Adrenal gland (tissue), 19 donors: ENCODE measurements at regions of chr2 and their contacts with region 1.

Region 1: GRCh38 chr2:55150834-55151233 is 81.3 kb downstream of the CLHC1 start:
- DNase-seq: no peak
- H3K4me3 ChIP-seq: no peak overlapping the region
- H3K27ac ChIP-seq: no peak overlapping the region
- H3K4me1 ChIP-seq: no peaks in the 10 kb centered on the region
- H3K27me3 ChIP-seq: no peaks in the 10 kb centered on the region
- CTCF ChIP-seq: no peak
- POLR2A ChIP-seq: no peak

Region 2: DNA sequence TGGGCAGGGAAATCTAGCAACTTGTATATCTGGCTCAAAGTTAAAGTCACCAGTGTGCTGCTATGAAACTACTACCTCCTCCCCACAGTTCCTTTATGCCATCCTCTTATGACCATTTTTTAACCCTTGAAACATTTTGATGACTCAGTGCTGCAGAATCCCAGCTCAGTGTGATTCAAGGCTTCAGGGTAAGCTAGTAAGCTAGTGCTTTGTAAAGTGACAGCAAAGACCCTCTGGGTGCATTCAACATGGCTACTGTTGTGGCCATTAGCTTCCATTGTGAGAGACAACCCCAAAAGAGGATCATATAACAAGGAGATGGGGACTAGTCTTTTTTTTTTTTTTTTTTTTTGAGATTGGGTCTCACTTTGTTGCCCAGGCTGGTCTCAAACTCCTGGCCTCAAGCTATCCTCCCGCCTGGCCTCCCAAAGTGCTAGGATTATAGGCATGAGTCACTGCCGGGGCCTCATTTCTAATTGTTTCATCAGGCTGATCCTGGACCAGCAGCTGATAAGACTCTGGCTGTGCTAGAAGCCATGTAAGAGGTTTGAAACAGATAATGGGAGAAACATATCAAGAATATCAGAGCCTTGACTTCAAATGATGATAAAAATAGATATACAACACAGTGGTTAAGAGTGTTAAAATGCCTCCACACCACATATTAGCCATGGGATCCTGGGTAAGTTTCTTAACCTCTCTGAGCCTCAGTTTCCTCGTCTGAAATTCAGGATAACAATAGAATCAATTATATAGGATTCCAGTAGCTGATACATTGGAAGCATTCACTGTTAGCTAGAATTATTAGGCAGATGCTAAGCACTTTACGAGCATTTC is 34.9 kb before region 1 on chr2:
- intact Hi-C with region 1: loop called in 1 of 2 experiments (anchors 5 kb)
- DNase-seq: peak in 5 of 7 donors; percentile 38 to 69 (median 59)
- H3K4me3 ChIP-seq: no peak overlapping the region
- H3K27ac ChIP-seq: peak overlapping the region in 1 of 5 donors; percentile 18
- H3K4me1 ChIP-seq: peaks cover 24 to 34% of the 10 kb centered on the region in 2 donors
- H3K27me3 ChIP-seq: no peaks in the 10 kb centered on the region
- CTCF ChIP-seq: no peak
- POLR2A ChIP-seq: no peak